CD8-positive, alpha-beta T cell (primary cell): ENCODE measurements at regions of chr11 and their contacts with region 1.

Region 1: GRCh38 chr11:575996-576768 is at the start of gene PHRF1:
- DNase-seq: peak; percentile 91 to 98 (median 96)
- ATAC-seq: peak; percentile 88
- H3K4me3 ChIP-seq: peak within 1 kb of the TSS; percentile 89 to 93
- H3K4me3 Mint-ChIP-seq: peak within 1 kb of the TSS; percentile 98
- H3K27ac ChIP-seq: peak within 1 kb of the TSS; percentile 84 to 95
- H3K27ac Mint-ChIP-seq: peak within 1 kb of the TSS; percentile 96
- H3K4me1 ChIP-seq: peaks cover 46% of the 10 kb centered on the region
- H3K4me1 Mint-ChIP-seq: peaks cover 54% of the 10 kb centered on the region
- H3K27me3 ChIP-seq: no peaks in the 10 kb centered on the region
- H3K27me3 Mint-ChIP-seq: peaks cover 2% of the 10 kb centered on the region
- CTCF ChIP-seq: no peak
- total RNA-seq, gene PHRF1: 43.2 to 44.9 TPM

Region 2: DNA sequence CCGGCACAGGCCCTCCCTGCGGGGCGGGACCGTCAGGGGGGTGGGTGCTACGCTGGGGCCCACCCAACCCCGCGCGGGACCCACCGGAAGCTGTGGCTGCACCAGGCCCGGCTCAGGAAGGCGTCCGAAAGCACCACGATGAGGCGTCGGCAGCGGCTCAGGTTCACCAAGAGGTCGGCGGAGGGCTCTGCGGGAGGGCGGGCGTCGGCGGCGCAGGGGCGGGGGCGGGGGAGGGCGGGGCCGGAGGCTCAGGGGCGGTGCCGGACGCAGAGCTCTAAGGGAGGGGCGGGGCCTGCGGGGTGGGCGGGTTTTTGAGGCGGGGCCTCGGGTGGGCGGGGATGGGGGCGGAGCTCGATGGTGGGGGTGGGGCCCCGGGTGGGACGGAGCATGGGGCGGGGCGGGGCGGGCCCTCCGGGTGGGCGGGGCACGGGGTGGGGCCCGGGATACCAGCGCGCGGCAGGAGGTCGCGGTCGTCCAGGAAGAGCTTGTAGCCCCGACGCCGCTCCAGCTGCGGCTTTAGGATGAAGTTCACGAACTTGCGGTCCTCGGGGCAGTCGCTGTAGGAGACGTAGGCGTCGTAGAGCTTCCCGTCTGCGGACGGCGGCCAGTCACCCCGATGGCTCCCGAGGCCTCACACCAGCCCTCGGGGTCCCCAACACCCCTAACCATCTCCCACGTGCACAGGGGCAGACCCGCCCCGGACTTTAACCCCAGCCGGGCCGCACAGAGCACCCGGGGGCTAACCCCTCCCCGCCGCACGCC is 169.0 kb before region 1 on chr11:
- CTCF ChIA-PET with region 1: no interaction called
- POLR2A ChIA-PET with region 1: no interaction called
- intact Hi-C with region 1: loop called (anchors 1 to 5 kb)
- DNase-seq: peak; percentile 89 to 99 (median 94)
- ATAC-seq: peak; percentile 86
- H3K4me3 ChIP-seq: peak overlapping the region in 1 of 2 experiments; percentile 19
- H3K4me3 Mint-ChIP-seq: no peak overlapping the region
- H3K27ac ChIP-seq: peak overlapping the region; percentile 46 to 73
- H3K27ac Mint-ChIP-seq: peak overlapping the region; percentile 82
- H3K4me1 ChIP-seq: peaks cover 25% of the 10 kb centered on the region
- H3K4me1 Mint-ChIP-seq: peaks cover 17% of the 10 kb centered on the region
- H3K27me3 ChIP-seq: no peaks in the 10 kb centered on the region
- H3K27me3 Mint-ChIP-seq: no peaks in the 10 kb centered on the region
- CTCF ChIP-seq: no peak

Region 3: GRCh38 chr11:548700-549603 is 27.2 kb before region 1 on chr11:
- CTCF ChIA-PET with region 1: no interaction called
- POLR2A ChIA-PET with region 1: no interaction called
- intact Hi-C with region 1: no loop called
- DNase-seq: peak in 1 of 9 experiments; percentile 8
- ATAC-seq: no peak
- H3K4me3 ChIP-seq: no peak overlapping the region
- H3K4me3 Mint-ChIP-seq: no peak overlapping the region
- H3K27ac ChIP-seq: no peak overlapping the region
- H3K27ac Mint-ChIP-seq: no peak overlapping the region
- H3K4me1 ChIP-seq: peaks cover 3% of the 10 kb centered on the region
- H3K4me1 Mint-ChIP-seq: no peaks in the 10 kb centered on the region
- H3K27me3 ChIP-seq: no peaks in the 10 kb centered on the region
- H3K27me3 Mint-ChIP-seq: no peaks in the 10 kb centered on the region
- CTCF ChIP-seq: no peak

Region 4: GRCh38 chr11:560305-561147 is 15.7 kb before region 1 on chr11 and contains the starts of genes LMNTD2 and RASSF7:
- CTCF ChIA-PET with region 1: interaction called, 7 read pairs
- POLR2A ChIA-PET with region 1: interaction called, 4 read pairs
- intact Hi-C with region 1: loop called (anchors 1 kb)
- DNase-seq: peak; percentile 92 to 98 (median 95)
- ATAC-seq: peak; percentile 94
- H3K4me3 ChIP-seq: peak within 1 kb of the TSS; percentile 51 to 94
- H3K4me3 Mint-ChIP-seq: peak within 1 kb of the TSS; percentile 88
- H3K27ac ChIP-seq: peak within 1 kb of the TSS; percentile 51 to 76
- H3K27ac Mint-ChIP-seq: peak within 1 kb of the TSS; percentile 84
- H3K4me1 ChIP-seq: peaks cover 19% of the 10 kb centered on the region
- H3K4me1 Mint-ChIP-seq: peaks cover 18% of the 10 kb centered on the region
- H3K27me3 ChIP-seq: no peaks in the 10 kb centered on the region
- H3K27me3 Mint-ChIP-seq: no peaks in the 10 kb centered on the region
- CTCF ChIP-seq: no peak
- total RNA-seq, gene LMNTD2: 4.2 to 5.6 TPM
- total RNA-seq, gene RASSF7: 11.8 to 15.3 TPM

Region 5: GRCh38 chr11:587978-588380 is 11.8 kb after region 1 on chr11:
- CTCF ChIA-PET with region 1: interaction called, 5 read pairs
- POLR2A ChIA-PET with region 1: interaction called, 22 read pairs
- intact Hi-C with region 1: loop called (anchors 1 kb)
- DNase-seq: peak; percentile 42 to 95 (median 81)
- ATAC-seq: peak; percentile 95
- H3K4me3 ChIP-seq: peak overlapping the region in 1 of 2 experiments; percentile 3
- H3K4me3 Mint-ChIP-seq: peak overlapping the region; percentile 69
- H3K27ac ChIP-seq: peak overlapping the region; percentile 60 to 76
- H3K27ac Mint-ChIP-seq: peak overlapping the region; percentile 99
- H3K4me1 ChIP-seq: peaks cover 20% of the 10 kb centered on the region
- H3K4me1 Mint-ChIP-seq: peaks cover 29% of the 10 kb centered on the region
- H3K27me3 ChIP-seq: no peaks in the 10 kb centered on the region
- H3K27me3 Mint-ChIP-seq: no peaks in the 10 kb centered on the region
- CTCF ChIP-seq: no peak

Region 6: DNA sequence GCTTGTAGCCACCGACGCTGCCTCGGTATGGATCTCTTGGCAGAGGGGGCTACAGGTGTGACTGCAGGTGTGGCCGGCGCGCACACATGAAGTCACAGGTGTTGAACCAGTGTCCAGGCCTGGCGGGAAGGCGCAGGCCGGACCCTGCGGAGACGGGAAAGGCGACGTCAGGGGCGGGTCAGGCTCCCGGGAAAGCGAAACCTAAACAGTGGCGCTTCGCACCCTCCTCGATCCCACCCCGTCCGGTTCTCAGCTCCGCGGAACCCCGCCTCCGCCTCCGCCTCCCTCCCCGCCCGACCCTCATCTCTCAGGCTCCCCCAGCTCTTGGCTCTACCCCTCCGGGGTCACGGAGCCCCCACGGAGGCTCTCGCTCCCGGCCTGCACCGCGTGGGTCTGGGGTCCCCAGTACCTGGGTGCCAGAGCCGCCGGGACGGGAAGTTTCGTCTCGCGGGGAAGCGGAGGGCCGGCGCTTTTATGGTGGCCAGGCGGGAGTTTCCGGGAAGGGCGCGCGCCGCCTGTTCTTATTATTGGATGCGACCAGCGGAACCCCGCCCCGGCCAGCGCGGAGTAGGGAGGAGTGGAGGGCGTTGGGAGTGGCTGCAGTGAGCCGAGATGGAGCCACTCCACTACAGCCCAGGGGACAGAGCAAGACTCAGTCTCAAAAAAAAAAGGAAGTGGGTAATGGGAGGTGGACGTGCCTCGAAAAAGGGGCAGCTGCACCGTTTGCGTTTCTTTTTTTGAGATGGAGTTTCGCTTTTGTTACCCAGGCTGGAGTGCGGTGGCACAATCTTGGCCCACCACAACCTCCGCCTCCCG is 39.5 kb after region 1 on chr11 and contains the start of gene IRF7:
- CTCF ChIA-PET with region 1: no interaction called
- POLR2A ChIA-PET with region 1: interaction called, 7 read pairs
- intact Hi-C with region 1: loop called (anchors 1 to 2 kb)
- DNase-seq: peak; percentile 65 to 92 (median 87)
- ATAC-seq: peak; percentile 72
- H3K4me3 ChIP-seq: peak within 1 kb of the TSS; percentile 84 to 92
- H3K4me3 Mint-ChIP-seq: peak within 1 kb of the TSS; percentile 92
- H3K27ac ChIP-seq: peak within 1 kb of the TSS; percentile 83 to 95
- H3K27ac Mint-ChIP-seq: peak within 1 kb of the TSS; percentile 94
- H3K4me1 ChIP-seq: peaks cover 30% of the 10 kb centered on the region
- H3K4me1 Mint-ChIP-seq: peaks cover 10% of the 10 kb centered on the region
- H3K27me3 ChIP-seq: no peaks in the 10 kb centered on the region
- H3K27me3 Mint-ChIP-seq: no peaks in the 10 kb centered on the region
- CTCF ChIP-seq: no peak
- total RNA-seq, gene IRF7: 102 to 106 TPM

Region 7: GRCh38 chr11:629237-629583 is 53.0 kb after region 1 on chr11:
- CTCF ChIA-PET with region 1: no interaction called
- POLR2A ChIA-PET with region 1: no interaction called
- intact Hi-C with region 1: no loop called
- DNase-seq: peak in 3 of 9 experiments; percentile 23 to 59 (median 29)
- ATAC-seq: peak; percentile 37
- H3K4me3 ChIP-seq: no peak overlapping the region
- H3K4me3 Mint-ChIP-seq: peak overlapping the region; percentile 24
- H3K27ac ChIP-seq: no peak overlapping the region
- H3K27ac Mint-ChIP-seq: no peak overlapping the region
- H3K4me1 ChIP-seq: peaks cover 10% of the 10 kb centered on the region
- H3K4me1 Mint-ChIP-seq: peaks cover 18% of the 10 kb centered on the region
- H3K27me3 ChIP-seq: peaks cover 6 to 13% of the 10 kb centered on the region in 2 experiments
- H3K27me3 Mint-ChIP-seq: peaks cover 21% of the 10 kb centered on the region
- CTCF ChIP-seq: no peak

Region 8: GRCh38 chr11:809287-810039 is 233.3 kb after region 1 on chr11 and contains the start of gene RPLP2:
- CTCF ChIA-PET with region 1: no interaction called
- POLR2A ChIA-PET with region 1: no interaction called
- intact Hi-C with region 1: loop called in 1 of 2 experiments (anchors 1 kb)
- DNase-seq: peak; percentile 93 to 99 (median 98)
- ATAC-seq: peak; percentile 80
- H3K4me3 ChIP-seq: peak within 1 kb of the TSS; percentile 85 to 96
- H3K4me3 Mint-ChIP-seq: peak within 1 kb of the TSS; percentile 94
- H3K27ac ChIP-seq: peak within 1 kb of the TSS; percentile 80 to 100
- H3K27ac Mint-ChIP-seq: peak within 1 kb of the TSS; percentile 97
- H3K4me1 ChIP-seq: peaks cover 37% of the 10 kb centered on the region
- H3K4me1 Mint-ChIP-seq: peaks cover 25% of the 10 kb centered on the region
- H3K27me3 ChIP-seq: no peaks in the 10 kb centered on the region
- H3K27me3 Mint-ChIP-seq: no peaks in the 10 kb centered on the region
- CTCF ChIP-seq: no peak
- total RNA-seq, gene RPLP2: 5,702 to 5,720 TPM

Region 9: GRCh38 chr11:819943-820649 is 243.9 kb after region 1 on chr11:
- CTCF ChIA-PET with region 1: no interaction called
- POLR2A ChIA-PET with region 1: no interaction called
- intact Hi-C with region 1: no loop called
- DNase-seq: peak; percentile 92 to 98 (median 97)
- ATAC-seq: peak; percentile 78
- H3K4me3 ChIP-seq: peak overlapping the region; percentile 67 to 94
- H3K4me3 Mint-ChIP-seq: peak overlapping the region; percentile 87
- H3K27ac ChIP-seq: peak overlapping the region; percentile 78 to 88
- H3K27ac Mint-ChIP-seq: peak overlapping the region; percentile 88
- H3K4me1 ChIP-seq: peaks cover 21% of the 10 kb centered on the region
- H3K4me1 Mint-ChIP-seq: peaks cover 11% of the 10 kb centered on the region
- H3K27me3 ChIP-seq: no peaks in the 10 kb centered on the region
- H3K27me3 Mint-ChIP-seq: no peaks in the 10 kb centered on the region
- CTCF ChIP-seq: no peak